Activated B cell treated with CpG ODN at 0.5 μM for 24 hours (primary cell): ENCODE measurements at regions of chr1 and their contacts with region 1.

Region 1: GRCh38 chr1:48916130-48917069 is 139.7 kb upstream of the BEND5 start:
- DNase-seq: no peak
- ATAC-seq: no peak
- H3K4me3 Mint-ChIP-seq: no peak overlapping the region
- H3K27ac Mint-ChIP-seq: no peak overlapping the region
- H3K4me1 Mint-ChIP-seq: peaks cover 7% of the 10 kb centered on the region
- H3K27me3 Mint-ChIP-seq: no peaks in the 10 kb centered on the region
- CTCF ChIP-seq: no peak

Region 2: DNA sequence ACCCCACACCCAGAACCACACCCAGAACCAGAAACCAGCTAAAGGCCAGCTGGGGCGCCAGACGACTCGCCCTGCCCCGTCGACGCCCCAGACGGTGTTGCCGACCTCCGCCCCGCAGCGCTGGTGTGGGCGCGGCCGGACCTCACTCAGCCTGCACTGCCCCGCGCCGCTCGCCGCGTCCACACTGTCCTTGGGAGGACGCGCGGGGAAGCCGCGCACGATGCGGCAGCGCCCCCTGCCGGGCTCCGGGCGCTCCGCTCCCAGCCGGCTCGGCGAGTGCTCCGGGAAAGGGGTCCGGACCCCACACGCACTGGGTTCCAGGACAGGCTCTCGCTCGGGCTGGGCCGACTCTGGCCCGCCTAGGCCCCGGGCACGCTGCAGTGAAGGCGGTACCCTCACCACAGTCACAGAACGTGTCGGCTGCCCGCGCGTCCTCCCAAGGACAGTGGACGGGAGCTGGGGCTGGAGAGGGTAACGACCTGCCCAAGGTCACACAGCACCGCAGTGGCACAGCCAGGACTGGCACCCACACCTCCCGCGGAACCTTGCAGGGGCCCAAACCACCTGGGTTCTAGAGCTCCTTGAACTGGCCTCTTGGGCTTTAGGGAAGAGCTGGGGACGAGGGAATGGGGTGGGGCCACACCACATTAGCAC is 1416.7 kb after region 1 on chr1:
- CTCF ChIA-PET with region 1: no interaction called
- POLR2A ChIA-PET with region 1: no interaction called
- intact Hi-C with region 1: loop called (anchors 5 kb)
- DNase-seq: peak; percentile 25
- ATAC-seq: no peak
- H3K4me3 Mint-ChIP-seq: peak overlapping the region; percentile 37
- H3K27ac Mint-ChIP-seq: no peak overlapping the region
- H3K4me1 Mint-ChIP-seq: peaks cover 3% of the 10 kb centered on the region
- H3K27me3 Mint-ChIP-seq: peaks cover 30% of the 10 kb centered on the region
- CTCF ChIP-seq: no peak

Region 3: GRCh38 chr1:50348449-50349241 is 1432.2 kb after region 1 on chr1:
- CTCF ChIA-PET with region 1: no interaction called
- POLR2A ChIA-PET with region 1: no interaction called
- intact Hi-C with region 1: loop called (anchors 5 kb)
- DNase-seq: no peak
- ATAC-seq: peak; percentile 34
- H3K4me3 Mint-ChIP-seq: no peak overlapping the region
- H3K27ac Mint-ChIP-seq: no peak overlapping the region
- H3K4me1 Mint-ChIP-seq: no peaks in the 10 kb centered on the region
- H3K27me3 Mint-ChIP-seq: peaks cover 15% of the 10 kb centered on the region
- CTCF ChIP-seq: peak; percentile 36